Right ventricle myocardium inferior (tissue), 1 donor: ENCODE measurements at regions of chr18 and their contacts with region 1.

Region 1: GRCh38 chr18:26963292-26963691 is 97.8 kb upstream of the AQP4 start:
- DNase-seq: no peak
- ATAC-seq: peak; percentile 37

Region 2: GRCh38 chr18:26804519-26804918 is 158.8 kb before region 1 on chr18:
- intact Hi-C with region 1: loop called (anchors 5 kb)
- DNase-seq: no peak
- ATAC-seq: peak; percentile 34

Region 3: DNA sequence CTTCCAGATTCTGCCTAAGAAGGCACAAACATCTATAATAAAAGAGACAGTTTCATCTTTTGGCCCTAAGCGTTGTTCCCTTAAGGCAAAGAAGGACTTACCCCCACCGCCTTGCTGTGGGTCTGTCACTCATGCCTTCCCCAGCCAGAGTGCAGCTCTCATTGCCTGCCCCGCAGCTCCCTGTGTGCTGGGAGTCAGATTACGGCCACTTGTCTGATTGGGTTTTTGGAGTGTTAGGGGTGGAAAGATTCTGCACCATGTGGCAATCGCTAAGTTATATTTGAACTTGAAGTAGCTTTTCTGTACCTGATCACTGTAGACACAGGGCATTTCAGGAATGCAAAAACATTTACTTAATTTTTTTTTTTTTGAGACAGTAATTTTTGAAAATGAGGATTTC is 97.7 kb before region 1 on chr18 and contains the start of gene AQP4:
- intact Hi-C with region 1: loop called (anchors 5 kb)
- DNase-seq: peak; percentile 72
- ATAC-seq: peak; percentile 88
- total RNA-seq, gene AQP4: 24.6 TPM

Region 4: GRCh38 chr18:27017901-27018500 is 54.7 kb after region 1 on chr18:
- intact Hi-C with region 1: no loop called
- DNase-seq: no peak
- ATAC-seq: no peak